Activated CD4-positive, alpha-beta T cell treated with anti-CD3 and anti-CD28 coated beads, Interleukin-2, amount 10 ng/mL, durations not matched to agents 24 days and 14 days (primary cell): ENCODE measurements at regions of chr5 and their contacts with region 1.

Region 1: GRCh38 chr5:61408476-61409168 is 76.6 kb downstream of the ZSWIM6 start:
- DNase-seq: peak; percentile 98
- H3K4me3 Mint-ChIP-seq: peak overlapping the region; percentile 79
- H3K27ac Mint-ChIP-seq: peak overlapping the region; percentile 89
- H3K4me1 Mint-ChIP-seq: peaks cover 20% of the 10 kb centered on the region
- H3K27me3 Mint-ChIP-seq: peaks cover 16% of the 10 kb centered on the region

Region 2: GRCh38 chr5:60944904-60945812 is 463.5 kb before region 1 on chr5 and contains the starts of genes ERCC8 and NDUFAF2:
- intact Hi-C with region 1: loop called (anchors 10 kb)
- DNase-seq: peak; percentile 96
- H3K4me3 Mint-ChIP-seq: no peak within 1 kb of the TSS
- H3K27ac Mint-ChIP-seq: no peak within 1 kb of the TSS
- H3K4me1 Mint-ChIP-seq: peaks cover 16% of the 10 kb centered on the region
- H3K27me3 Mint-ChIP-seq: no peaks in the 10 kb centered on the region
- total RNA-seq, gene ERCC8: 10.7 and 10.8 TPM in 2 replicates
- total RNA-seq, gene NDUFAF2: 38.0 and 39.5 TPM in 2 replicates

Region 3: GRCh38 chr5:61280205-61280604 is 128.4 kb before region 1 on chr5:
- intact Hi-C with region 1: loop called (anchors 10 kb)
- DNase-seq: peak; percentile 60
- H3K4me3 Mint-ChIP-seq: no peak overlapping the region
- H3K27ac Mint-ChIP-seq: no peak overlapping the region
- H3K4me1 Mint-ChIP-seq: peaks cover 24% of the 10 kb centered on the region
- H3K27me3 Mint-ChIP-seq: no peaks in the 10 kb centered on the region

Region 4: GRCh38 chr5:61534481-61535267 is 126.1 kb after region 1 on chr5:
- intact Hi-C with region 1: loop called (anchors 2 kb)
- DNase-seq: peak; percentile 69
- H3K4me3 Mint-ChIP-seq: no peak overlapping the region
- H3K27ac Mint-ChIP-seq: peak overlapping the region; percentile 42
- H3K4me1 Mint-ChIP-seq: peaks cover 11% of the 10 kb centered on the region
- H3K27me3 Mint-ChIP-seq: no peaks in the 10 kb centered on the region